AG04449 (cell line): ENCODE measurements at regions of chr18 and their contacts with region 1.

Region 1: GRCh38 chr18:11052800-11053199 is 96.6 kb downstream of the PIEZO2 start:
- DNase-seq: no peak
- H3K4me3 ChIP-seq: no peak overlapping the region
- CTCF ChIP-seq: no peak

Region 2: GRCh38 chr18:11040823-11041656 is 11.8 kb before region 1 on chr18:
- CTCF ChIA-PET with region 1: interaction called, 20 read pairs
- POLR2A ChIA-PET with region 1: no interaction called
- DNase-seq: no peak
- H3K4me3 ChIP-seq: no peak overlapping the region
- CTCF ChIP-seq: peak; percentile 67

Region 3: GRCh38 chr18:11089931-11090715 is 37.3 kb after region 1 on chr18:
- CTCF ChIA-PET with region 1: no interaction called
- POLR2A ChIA-PET with region 1: no interaction called
- DNase-seq: no peak
- H3K4me3 ChIP-seq: no peak overlapping the region
- CTCF ChIP-seq: no peak